Caco-2 (cell line): ENCODE measurements at regions of chr10 and their contacts with region 1.

Region 1: DNA sequence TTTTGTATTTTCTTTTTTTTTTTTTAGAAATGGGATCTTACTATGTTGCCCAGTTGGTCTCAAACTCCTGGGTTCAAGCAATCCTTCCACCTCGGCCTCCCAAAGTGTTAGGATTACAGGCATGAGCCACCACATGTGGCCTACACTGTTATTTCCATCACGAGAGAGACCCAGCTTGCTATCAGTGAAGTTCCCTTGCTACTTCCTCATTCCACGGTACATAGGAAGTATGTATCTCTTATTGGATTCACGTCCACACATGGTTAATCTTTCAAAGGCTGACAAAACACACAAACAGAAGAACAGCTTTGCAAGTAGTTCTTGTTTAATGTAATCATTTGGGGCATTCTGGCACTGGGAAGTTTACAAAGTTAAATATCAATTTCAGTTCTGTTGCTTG is 50.9 kb downstream of the DCLRE1A start:
- DNase-seq: no peak
- H3K4me3 ChIP-seq: no peak overlapping the region
- H3K4me3 Mint-ChIP-seq: no peak overlapping the region
- H3K27ac Mint-ChIP-seq: no peak overlapping the region
- H3K4me1 ChIP-seq: no peaks in the 10 kb centered on the region
- H3K4me1 Mint-ChIP-seq: no peaks in the 10 kb centered on the region
- H3K27me3 ChIP-seq: no peaks in the 10 kb centered on the region
- H3K27me3 Mint-ChIP-seq: no peaks in the 10 kb centered on the region
- CTCF ChIP-seq: no peak

Region 2: GRCh38 chr10:113683300-113683699 is 119.7 kb before region 1 on chr10:
- CTCF ChIA-PET with region 1: no interaction called
- POLR2A ChIA-PET with region 1: no interaction called
- intact Hi-C with region 1: no loop called
- DNase-seq: no peak
- H3K4me3 ChIP-seq: no peak overlapping the region
- H3K4me3 Mint-ChIP-seq: no peak overlapping the region
- H3K27ac Mint-ChIP-seq: no peak overlapping the region
- H3K4me1 ChIP-seq: no peaks in the 10 kb centered on the region
- H3K4me1 Mint-ChIP-seq: peaks cover 6% of the 10 kb centered on the region
- H3K27me3 ChIP-seq: no peaks in the 10 kb centered on the region
- H3K27me3 Mint-ChIP-seq: no peaks in the 10 kb centered on the region
- CTCF ChIP-seq: no peak

Region 3: DNA sequence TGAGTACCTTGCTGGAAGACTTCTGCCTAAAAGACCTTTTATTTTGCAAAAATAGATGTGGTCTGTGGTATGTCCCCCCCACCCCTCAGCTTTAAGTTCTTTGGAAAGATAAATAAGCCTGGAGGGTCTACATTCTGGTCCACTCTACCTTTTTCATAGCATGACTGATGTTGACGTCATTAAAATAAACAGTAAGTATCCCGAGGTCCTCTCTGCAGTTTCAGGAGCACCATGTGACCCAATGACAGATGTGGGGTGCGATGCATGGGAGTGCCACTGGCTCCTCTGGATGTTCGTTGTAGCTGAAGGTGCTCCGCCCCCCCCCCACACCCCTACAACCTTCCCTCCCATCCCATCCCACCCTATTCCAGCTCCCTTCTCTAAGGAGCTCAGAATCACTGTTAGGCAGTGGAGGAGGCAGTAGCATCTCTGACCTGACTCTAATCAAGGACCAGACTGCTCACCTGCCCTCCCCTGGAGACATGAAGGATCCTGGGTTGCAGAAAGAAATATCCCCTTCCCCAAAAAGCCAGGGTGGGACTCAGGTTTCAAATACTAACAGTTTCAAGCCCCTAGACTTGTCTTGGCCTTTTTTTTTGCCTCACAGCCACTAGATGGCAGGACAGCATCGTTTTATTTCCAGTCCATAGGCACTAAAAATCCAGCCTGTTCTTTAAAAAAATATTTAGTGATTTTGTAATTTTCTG is 98.2 kb before region 1 on chr10:
- CTCF ChIA-PET with region 1: interaction called, 3 read pairs
- POLR2A ChIA-PET with region 1: no interaction called
- intact Hi-C with region 1: loop called (anchors 1 kb)
- DNase-seq: peak in 1 of 2 experiments; percentile 45
- H3K4me3 ChIP-seq: no peak overlapping the region
- H3K4me3 Mint-ChIP-seq: no peak overlapping the region
- H3K27ac Mint-ChIP-seq: no peak overlapping the region
- H3K4me1 ChIP-seq: no peaks in the 10 kb centered on the region
- H3K4me1 Mint-ChIP-seq: no peaks in the 10 kb centered on the region
- H3K27me3 ChIP-seq: no peaks in the 10 kb centered on the region
- H3K27me3 Mint-ChIP-seq: no peaks in the 10 kb centered on the region
- CTCF ChIP-seq: peak; percentile 71 to 76

Region 4: GRCh38 chr10:113735921-113736320 is 67.1 kb before region 1 on chr10:
- CTCF ChIA-PET with region 1: no interaction called
- POLR2A ChIA-PET with region 1: no interaction called
- intact Hi-C with region 1: loop called (anchors 5 kb)
- DNase-seq: peak; percentile 61 to 64
- H3K4me3 ChIP-seq: no peak overlapping the region
- H3K4me3 Mint-ChIP-seq: no peak overlapping the region
- H3K27ac Mint-ChIP-seq: no peak overlapping the region
- H3K4me1 ChIP-seq: peaks cover 9% of the 10 kb centered on the region
- H3K4me1 Mint-ChIP-seq: no peaks in the 10 kb centered on the region
- H3K27me3 ChIP-seq: no peaks in the 10 kb centered on the region
- H3K27me3 Mint-ChIP-seq: no peaks in the 10 kb centered on the region
- CTCF ChIP-seq: peak; percentile 22 to 46

Region 5: DNA sequence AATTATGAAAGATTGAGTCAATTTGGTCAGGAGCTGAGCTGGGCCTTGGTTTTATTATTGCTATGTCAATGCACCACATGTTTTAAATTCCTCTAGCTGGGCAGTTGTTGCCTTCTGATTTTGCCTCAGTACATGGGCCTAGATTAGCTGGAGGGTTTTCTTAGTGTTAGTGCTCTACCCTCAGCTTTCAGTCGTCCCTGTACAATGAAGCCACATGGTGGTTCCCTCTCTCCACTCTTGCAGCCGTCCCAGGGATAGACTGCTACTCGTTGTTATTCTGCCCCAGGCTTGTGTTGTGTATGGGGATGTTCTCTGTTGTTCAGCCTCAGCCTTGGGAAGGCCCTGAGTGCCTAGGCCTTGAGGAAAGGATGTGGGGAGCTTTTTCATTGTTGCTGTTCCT is 88.5 kb after region 1 on chr10:
- CTCF ChIA-PET with region 1: no interaction called
- POLR2A ChIA-PET with region 1: no interaction called
- intact Hi-C with region 1: loop called (anchors 1 kb)
- DNase-seq: peak; percentile 41 to 42
- H3K4me3 ChIP-seq: no peak overlapping the region
- H3K4me3 Mint-ChIP-seq: no peak overlapping the region
- H3K27ac Mint-ChIP-seq: peak overlapping the region; percentile 37
- H3K4me1 ChIP-seq: peaks cover 30% of the 10 kb centered on the region
- H3K4me1 Mint-ChIP-seq: peaks cover 39% of the 10 kb centered on the region
- H3K27me3 ChIP-seq: no peaks in the 10 kb centered on the region
- H3K27me3 Mint-ChIP-seq: no peaks in the 10 kb centered on the region
- CTCF ChIP-seq: no peak

Region 6: GRCh38 chr10:113939212-113939860 is 136.3 kb after region 1 on chr10:
- CTCF ChIA-PET with region 1: interaction called, 7 read pairs
- POLR2A ChIA-PET with region 1: no interaction called
- intact Hi-C with region 1: loop called (anchors 2 kb)
- DNase-seq: no peak
- H3K4me3 ChIP-seq: no peak overlapping the region
- H3K4me3 Mint-ChIP-seq: no peak overlapping the region
- H3K27ac Mint-ChIP-seq: no peak overlapping the region
- H3K4me1 ChIP-seq: peaks cover 1% of the 10 kb centered on the region
- H3K4me1 Mint-ChIP-seq: peaks cover 2% of the 10 kb centered on the region
- H3K27me3 ChIP-seq: no peaks in the 10 kb centered on the region
- H3K27me3 Mint-ChIP-seq: no peaks in the 10 kb centered on the region
- CTCF ChIP-seq: peak in 1 of 2 experiments; percentile 12

Region 7: DNA sequence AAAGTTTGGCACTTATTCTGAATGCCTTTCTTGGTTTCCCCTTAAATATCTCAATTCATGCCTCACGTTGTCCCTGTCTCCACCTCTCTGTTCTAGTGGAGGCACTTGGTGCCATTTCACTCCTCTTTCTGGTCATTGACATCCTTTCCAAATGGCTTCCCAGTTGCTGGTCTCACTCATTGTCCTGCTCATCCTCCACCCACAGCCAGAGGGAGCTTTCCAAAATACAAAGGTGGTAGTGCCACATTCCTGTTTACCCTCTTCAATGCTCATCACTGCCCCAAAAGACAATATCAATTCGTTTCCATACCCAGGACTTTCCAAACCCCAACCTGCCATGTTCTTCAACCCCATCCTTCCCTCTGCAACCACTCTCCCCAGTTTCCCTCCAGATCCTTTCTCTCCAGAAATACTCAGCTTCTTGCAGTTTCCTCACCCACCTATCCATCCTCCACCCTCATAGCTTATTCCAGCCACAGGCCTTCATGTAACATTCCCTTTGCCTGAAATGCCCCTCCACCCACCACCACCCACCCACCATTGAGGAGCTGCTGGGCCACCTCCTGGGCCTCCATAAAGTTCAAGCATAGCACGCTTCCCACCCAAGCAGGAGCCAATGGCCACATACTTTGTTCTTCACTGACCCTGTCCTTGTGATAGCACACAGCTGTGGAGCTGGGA is 177.6 kb after region 1 on chr10:
- CTCF ChIA-PET with region 1: no interaction called
- POLR2A ChIA-PET with region 1: no interaction called
- intact Hi-C with region 1: no loop called
- DNase-seq: no peak
- H3K4me3 ChIP-seq: no peak overlapping the region
- H3K4me3 Mint-ChIP-seq: no peak overlapping the region
- H3K27ac Mint-ChIP-seq: no peak overlapping the region
- H3K4me1 ChIP-seq: peaks cover 8% of the 10 kb centered on the region; the same call in 1 of the 2 replicates
- H3K4me1 Mint-ChIP-seq: no peaks in the 10 kb centered on the region
- H3K27me3 ChIP-seq: no peaks in the 10 kb centered on the region
- H3K27me3 Mint-ChIP-seq: no peaks in the 10 kb centered on the region
- CTCF ChIP-seq: peak in 1 of 2 experiments; percentile 29